ENCODE measurements at regions of chr17 and their contacts with region 1.

Region 1: DNA sequence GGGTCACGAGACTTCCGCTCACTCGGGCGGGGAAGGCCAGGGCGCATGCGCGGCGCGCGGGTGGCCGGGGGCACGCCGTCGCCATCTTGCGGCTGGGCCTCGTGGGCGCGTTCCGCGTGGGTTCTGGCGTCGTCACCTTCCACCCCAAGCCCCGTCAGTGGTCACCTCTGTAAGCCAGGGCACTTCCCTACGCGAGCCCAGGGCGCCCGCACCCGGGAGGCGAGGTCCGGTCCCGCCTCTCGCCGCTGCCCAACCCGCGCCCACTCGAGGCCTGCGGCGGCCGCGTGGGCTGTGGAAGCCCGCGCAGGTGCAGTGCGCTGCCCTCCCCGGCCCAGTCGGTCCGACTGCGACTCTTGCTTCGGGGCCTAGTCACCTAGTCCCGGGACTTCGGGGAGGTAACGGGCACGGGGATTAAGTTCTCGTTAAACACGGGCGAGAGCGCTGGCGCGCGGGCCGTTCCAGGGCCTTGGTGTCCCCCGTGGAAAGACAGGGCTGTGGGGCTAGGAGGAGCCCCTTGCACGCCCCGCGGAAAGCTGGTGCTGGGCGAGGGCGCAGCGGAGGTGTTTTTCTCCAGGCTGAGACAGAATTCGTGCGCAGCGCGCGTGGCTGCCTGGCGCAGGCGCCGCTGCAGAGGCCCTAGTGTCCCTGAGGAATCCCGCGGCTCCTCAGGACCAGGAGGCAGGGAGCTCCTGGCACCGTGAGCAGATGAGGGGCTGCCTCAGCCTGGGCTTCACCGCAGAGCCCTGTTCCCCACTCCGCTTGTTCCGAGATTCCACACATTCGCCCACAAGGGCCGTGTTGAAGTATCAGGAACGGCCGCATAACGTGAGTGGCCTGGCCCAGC is 472 bp upstream of the ARHGDIA start:
- DNase-seq: peak; percentile 99
- ATAC-seq: peak; percentile 17
- H3K4me3 Mint-ChIP-seq: peak overlapping the region; percentile 88
- H3K27ac Mint-ChIP-seq: peak overlapping the region; percentile 97
- H3K4me1 Mint-ChIP-seq: peaks cover 20% of the 10 kb centered on the region
- H3K27me3 Mint-ChIP-seq: no peaks in the 10 kb centered on the region

Region 2: GRCh38 chr17:81844327-81844851 is 27.2 kb before region 1 on chr17:
- POLR2A ChIA-PET with region 1: no interaction called
- DNase-seq: no peak
- ATAC-seq: no peak
- H3K4me3 Mint-ChIP-seq: no peak overlapping the region
- H3K27ac Mint-ChIP-seq: no peak overlapping the region
- H3K4me1 Mint-ChIP-seq: no peaks in the 10 kb centered on the region
- H3K27me3 Mint-ChIP-seq: no peaks in the 10 kb centered on the region

Region 3: DNA sequence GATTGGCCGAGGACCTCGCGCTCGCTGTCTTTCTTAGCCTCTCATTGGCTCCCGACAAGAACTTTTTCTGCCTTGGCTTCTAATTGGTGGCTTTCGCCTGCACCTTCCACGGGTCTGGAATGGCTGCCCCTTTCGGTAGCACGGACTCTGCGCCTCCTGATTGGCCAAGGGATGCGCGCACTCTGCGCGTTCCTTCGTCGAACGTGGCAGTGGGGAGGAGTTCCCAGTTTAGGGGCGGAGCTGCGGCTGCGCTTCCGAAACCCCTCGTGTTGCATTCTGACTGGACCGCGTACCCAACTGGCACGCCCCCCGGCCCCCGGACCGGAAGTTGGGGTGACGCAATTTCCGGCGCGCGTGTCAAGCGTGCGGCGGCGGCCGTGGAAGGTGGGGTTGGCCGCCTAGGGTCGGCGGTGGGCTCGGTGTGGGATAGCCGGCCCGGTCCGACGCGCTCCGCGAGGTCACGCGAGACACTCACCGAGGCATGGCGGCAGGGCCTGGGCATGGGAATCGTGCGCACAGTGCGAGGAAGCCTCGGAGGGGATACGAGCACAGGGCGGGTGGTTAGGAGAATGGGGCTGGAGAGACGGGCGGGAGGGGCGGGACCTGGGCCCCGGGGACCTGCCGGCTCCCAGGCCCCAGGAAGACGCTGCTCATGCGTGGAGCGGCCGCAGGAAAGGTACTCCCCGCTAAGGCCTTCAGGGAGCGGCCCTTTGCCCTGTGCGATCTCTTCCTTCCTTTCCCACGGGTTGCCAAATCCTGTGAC is 10.7 kb before region 1 on chr17:
- POLR2A ChIA-PET with region 1: interaction called, 29 read pairs
- DNase-seq: peak; percentile 100
- ATAC-seq: peak; percentile 91
- H3K4me3 Mint-ChIP-seq: peak overlapping the region; percentile 87
- H3K27ac Mint-ChIP-seq: peak overlapping the region; percentile 90
- H3K4me1 Mint-ChIP-seq: peaks cover 29% of the 10 kb centered on the region
- H3K27me3 Mint-ChIP-seq: no peaks in the 10 kb centered on the region

Region 4: GRCh38 chr17:81890447-81891299 is 19.1 kb after region 1 on chr17:
- POLR2A ChIA-PET with region 1: interaction called, 26 read pairs
- DNase-seq: peak; percentile 58
- ATAC-seq: no peak
- H3K4me3 Mint-ChIP-seq: peak overlapping the region; percentile 87
- H3K27ac Mint-ChIP-seq: peak overlapping the region; percentile 94
- H3K4me1 Mint-ChIP-seq: peaks cover 11% of the 10 kb centered on the region
- H3K27me3 Mint-ChIP-seq: no peaks in the 10 kb centered on the region

Region 5: DNA sequence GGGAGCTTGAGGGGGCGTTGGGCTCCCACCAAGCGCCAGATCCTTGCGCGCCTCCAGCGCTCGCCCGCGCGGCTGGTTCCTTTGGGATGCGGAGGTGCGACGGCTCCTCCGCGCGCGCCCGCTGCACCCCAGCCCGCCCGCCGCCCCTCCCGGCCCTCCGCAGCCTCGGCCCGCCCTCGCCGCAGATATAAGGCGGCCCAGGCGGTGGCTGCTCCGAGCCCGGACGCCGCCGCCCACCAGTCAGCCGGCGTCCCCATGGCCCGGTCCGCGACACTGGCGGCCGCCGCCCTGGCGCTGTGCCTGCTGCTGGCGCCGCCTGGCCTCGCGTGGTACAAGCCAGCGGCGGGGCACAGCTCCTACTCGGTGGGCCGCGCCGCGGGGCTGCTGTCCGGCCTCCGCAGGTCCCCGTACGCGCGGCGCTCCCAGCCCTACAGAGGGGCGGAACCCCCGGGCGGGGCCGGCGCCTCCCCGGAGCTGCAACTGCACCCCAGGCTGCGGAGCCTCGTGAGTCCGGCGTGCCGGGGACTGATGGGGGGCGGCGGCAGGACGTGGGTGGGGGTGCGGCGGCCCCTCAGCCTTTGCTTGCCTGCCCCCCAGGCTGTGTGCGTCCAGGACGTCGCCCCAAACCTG is 30.5 kb after region 1 on chr17 and contains the start of gene NPB:
- POLR2A ChIA-PET with region 1: no interaction called
- DNase-seq: no peak
- ATAC-seq: peak; percentile 52
- H3K4me3 Mint-ChIP-seq: no peak within 1 kb of the TSS
- H3K27ac Mint-ChIP-seq: no peak within 1 kb of the TSS
- H3K4me1 Mint-ChIP-seq: peaks cover 2% of the 10 kb centered on the region
- H3K27me3 Mint-ChIP-seq: peaks cover 11% of the 10 kb centered on the region
- total RNA-seq, gene NPB: 0.47 to 1.0 TPM

Region 6: DNA sequence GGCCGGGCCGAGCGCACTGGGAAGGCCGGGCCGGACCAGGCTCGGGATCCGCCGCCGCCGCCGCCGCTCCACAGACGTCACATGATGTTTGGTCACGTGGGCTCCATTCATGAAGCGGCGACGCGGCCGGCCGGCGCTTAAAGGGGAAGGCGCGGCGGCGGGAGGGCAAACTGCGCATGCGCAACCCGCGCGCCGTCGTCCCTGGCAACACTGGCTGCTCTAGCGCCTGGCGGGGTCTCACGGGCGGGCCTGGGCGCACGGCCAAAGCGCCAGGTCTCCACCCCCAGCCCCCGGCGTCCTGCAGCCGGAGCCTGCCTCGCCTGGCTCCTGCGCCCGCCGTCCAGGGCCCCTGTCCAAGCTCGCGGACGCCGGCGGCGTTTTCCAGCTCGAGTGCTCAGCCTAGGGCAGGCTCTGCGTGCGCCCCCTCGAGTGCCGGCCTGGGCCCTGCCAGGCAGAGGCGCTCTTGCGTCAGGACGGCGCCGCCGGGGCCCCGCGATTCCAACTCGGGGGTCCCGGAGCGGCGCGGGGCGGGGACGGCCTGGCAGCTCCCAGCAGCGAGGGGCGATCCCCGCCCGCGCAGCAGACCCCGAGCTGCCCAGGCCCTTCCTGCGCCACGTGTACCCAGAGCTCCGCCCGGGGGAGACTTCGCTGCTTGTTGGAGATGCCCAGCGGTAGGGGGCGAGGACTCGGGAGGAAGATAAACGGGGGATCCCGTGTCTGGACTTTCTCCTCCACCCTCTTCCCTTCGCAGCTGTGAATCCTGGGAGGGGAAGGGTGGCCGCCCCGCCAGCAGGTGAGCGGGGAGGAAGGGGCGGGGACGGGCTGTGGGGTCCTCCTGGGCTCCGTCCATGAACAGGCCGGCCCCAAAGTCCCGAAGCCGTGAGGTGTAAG is 56.3 kb after region 1 on chr17 and contains the start of gene MAFG:
- POLR2A ChIA-PET with region 1: interaction called, 13 read pairs
- DNase-seq: peak; percentile 97
- ATAC-seq: peak; percentile 72
- H3K4me3 Mint-ChIP-seq: peak within 1 kb of the TSS; percentile 91
- H3K27ac Mint-ChIP-seq: peak within 1 kb of the TSS; percentile 88
- H3K4me1 Mint-ChIP-seq: peaks cover 16% of the 10 kb centered on the region
- H3K27me3 Mint-ChIP-seq: no peaks in the 10 kb centered on the region
- total RNA-seq, gene MAFG: 18.3 to 20.4 TPM